ENCODE measurements at regions of chr6 and their contacts with region 1.

Region 1: GRCh38 chr6:24855395-24856245 is 56.9 kb upstream of the ARMH2 start:
- DNase-seq: peak; percentile 45
- ATAC-seq: peak; percentile 93
- H3K4me3 ChIP-seq: no peak overlapping the region
- H3K27ac ChIP-seq: no peak overlapping the region
- H3K4me1 ChIP-seq: no peaks in the 10 kb centered on the region
- H3K27me3 ChIP-seq: peaks cover 13% of the 10 kb centered on the region; the same call in 1 of the 2 replicates
- CTCF ChIP-seq: peak; percentile 90

Region 2: GRCh38 chr6:24991810-24992467 is 136.3 kb after region 1 on chr6:
- CTCF ChIA-PET with region 1: interaction called, 6 read pairs
- POLR2A ChIA-PET with region 1: no interaction called
- in situ Hi-C with region 1: no loop called
- intact Hi-C with region 1: loop called (anchors 2 kb)
- DNase-seq: peak; percentile 13
- ATAC-seq: peak; percentile 81
- H3K4me3 ChIP-seq: no peak overlapping the region
- H3K27ac ChIP-seq: no peak overlapping the region
- H3K4me1 ChIP-seq: no peaks in the 10 kb centered on the region
- H3K27me3 ChIP-seq: no peaks in the 10 kb centered on the region
- CTCF ChIP-seq: peak; percentile 77

Region 3: DNA sequence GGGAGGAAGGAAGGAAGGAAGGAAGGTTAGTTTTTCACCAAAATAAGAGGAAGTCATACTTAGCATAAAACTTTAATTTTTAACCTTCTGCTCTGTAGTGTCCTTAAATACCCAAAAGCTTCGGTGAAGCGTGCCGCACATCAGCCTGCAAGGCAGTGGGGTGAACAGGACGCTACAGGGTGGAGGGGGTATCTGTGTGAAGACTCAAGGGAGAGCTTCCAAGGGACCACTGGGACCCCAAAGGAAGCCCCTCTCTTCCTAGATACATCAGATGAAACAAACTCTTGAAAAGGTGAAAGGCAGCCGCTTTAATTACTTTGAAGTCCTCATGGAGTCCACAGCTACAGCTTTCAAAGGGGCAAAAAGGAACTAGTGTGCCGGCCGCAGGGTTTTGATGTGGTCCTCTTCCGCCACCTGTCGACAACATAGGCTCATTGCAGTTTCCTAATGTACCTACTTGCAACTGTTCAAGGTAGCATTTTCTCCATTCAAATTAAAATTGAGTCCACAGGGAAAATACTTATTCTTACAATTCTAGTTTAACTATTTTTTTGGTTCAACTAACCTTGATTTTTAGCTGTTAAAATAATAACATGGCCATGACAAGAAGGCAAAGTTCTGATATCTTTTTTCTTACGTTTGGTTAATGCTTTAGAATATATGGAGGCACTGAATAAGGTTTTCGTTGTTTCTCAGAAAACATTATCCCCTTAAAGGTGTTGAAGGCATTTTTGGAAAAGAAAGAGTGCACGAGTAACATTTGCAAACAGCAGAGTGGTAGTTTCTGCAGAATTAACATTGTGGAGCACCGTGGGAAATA is 215.1 kb after region 1 on chr6:
- CTCF ChIA-PET with region 1: no interaction called
- POLR2A ChIA-PET with region 1: no interaction called
- in situ Hi-C with region 1: no loop called
- intact Hi-C with region 1: loop called (anchors 1 kb)
- DNase-seq: peak; percentile 52
- ATAC-seq: peak; percentile 94
- H3K4me3 ChIP-seq: no peak overlapping the region
- H3K27ac ChIP-seq: no peak overlapping the region
- H3K4me1 ChIP-seq: no peaks in the 10 kb centered on the region
- H3K27me3 ChIP-seq: 0 out of 2 replicates have a peak, but pooled peaks cover 2% of the 10 kb centered on the region
- CTCF ChIP-seq: peak; percentile 89

Measured in Panc1 (cell line).